KBM-7 (cell line): ENCODE measurements at regions of chr4 and their contacts with region 1.

Region 1: GRCh38 chr4:67545199-67546003 is at the start of gene CENPC:
- DNase-seq: peak; percentile 97

Region 2: DNA sequence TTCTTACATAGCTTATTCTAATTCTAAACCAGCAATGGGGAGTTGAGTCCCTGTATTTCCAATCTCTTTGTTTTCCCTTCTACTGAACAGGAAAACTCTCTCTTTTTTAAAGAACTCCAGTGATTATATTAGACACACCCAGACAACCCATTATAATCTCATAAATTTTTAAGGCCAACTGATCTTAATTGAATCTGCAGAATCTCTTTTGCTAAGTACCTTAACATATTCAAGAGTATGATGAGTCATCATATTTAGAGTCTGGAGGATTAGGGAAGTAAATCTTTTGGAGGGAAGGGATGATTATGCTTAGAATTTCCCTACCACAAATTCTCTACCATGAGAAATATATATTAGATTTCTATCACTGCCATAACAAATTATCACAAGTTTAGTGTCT is 705.2 kb before region 1 on chr4:
- in situ Hi-C with region 1: no loop called
- DNase-seq: no peak

Region 3: DNA sequence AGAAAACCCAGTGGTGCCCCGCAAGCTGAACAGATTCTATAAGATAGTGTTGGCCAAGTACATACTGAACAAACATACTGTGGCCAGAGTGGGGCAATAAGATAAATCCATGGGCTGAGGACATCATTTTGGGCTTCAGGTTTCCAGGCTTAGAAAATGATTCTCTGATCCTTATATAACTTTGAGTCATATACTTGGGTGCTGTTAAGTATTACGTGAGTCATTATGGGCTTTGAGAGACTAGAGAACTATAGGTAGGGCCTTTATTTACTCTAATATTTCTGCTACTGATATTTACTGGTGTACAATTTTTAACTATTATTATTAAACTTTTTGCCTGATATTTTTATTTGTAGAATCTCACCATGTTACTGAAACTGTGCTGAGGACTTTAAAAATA is 586.2 kb before region 1 on chr4:
- in situ Hi-C with region 1: no loop called
- DNase-seq: no peak

Region 4: GRCh38 chr4:67674096-67674495 is 128.7 kb after region 1 on chr4:
- in situ Hi-C with region 1: no loop called
- DNase-seq: no peak

Region 5: GRCh38 chr4:67885762-67886161 is 340.4 kb after region 1 on chr4:
- in situ Hi-C with region 1: loop called (anchors 25 kb)
- DNase-seq: no peak